Activated T-helper 1 cell treated with anti-CD3 and anti-CD28 coated beads, Interleukin-12 subunit alpha, Interleukin-12 subunit beta, Interleukin-2, Interleukin-4 antibody, amounts not matched to agents 30 ng/mL and 10 ng/mL and 1 ng/mL, durations not matched to agents 14 hours and 24 hours and 36 hours (primary cell): ENCODE measurements at regions of chr1 and their contacts with region 1.

Region 1: DNA sequence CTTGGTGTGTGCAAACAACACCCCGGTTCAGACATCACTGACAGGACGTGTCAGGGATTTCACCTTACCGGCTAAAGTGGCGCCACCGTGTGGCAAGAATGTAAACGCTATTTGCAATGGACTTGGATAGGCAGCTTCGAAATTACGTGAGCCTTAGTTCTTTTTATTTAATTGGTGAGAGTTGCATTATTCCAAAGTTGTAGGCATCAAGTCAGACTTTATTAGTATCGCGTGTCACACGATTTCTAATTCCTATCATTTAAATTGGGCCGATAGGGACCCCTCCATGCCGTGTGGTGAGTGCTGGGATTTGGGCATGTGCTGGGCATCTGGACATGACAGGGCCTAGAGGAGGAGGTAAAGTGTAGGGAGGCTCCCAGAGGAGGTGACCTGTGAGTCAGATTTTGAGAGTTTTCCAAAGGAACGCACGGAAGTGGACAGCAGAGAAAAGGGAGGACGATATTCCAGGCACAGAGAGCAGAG is 14.5 kb upstream of the CPT2 start:
- DNase-seq: peak; percentile 63
- H3K4me3 Mint-ChIP-seq: no peak overlapping the region
- H3K27ac Mint-ChIP-seq: no peak overlapping the region
- H3K4me1 Mint-ChIP-seq: no peaks in the 10 kb centered on the region
- H3K27me3 Mint-ChIP-seq: peaks cover 8% of the 10 kb centered on the region

Region 2: DNA sequence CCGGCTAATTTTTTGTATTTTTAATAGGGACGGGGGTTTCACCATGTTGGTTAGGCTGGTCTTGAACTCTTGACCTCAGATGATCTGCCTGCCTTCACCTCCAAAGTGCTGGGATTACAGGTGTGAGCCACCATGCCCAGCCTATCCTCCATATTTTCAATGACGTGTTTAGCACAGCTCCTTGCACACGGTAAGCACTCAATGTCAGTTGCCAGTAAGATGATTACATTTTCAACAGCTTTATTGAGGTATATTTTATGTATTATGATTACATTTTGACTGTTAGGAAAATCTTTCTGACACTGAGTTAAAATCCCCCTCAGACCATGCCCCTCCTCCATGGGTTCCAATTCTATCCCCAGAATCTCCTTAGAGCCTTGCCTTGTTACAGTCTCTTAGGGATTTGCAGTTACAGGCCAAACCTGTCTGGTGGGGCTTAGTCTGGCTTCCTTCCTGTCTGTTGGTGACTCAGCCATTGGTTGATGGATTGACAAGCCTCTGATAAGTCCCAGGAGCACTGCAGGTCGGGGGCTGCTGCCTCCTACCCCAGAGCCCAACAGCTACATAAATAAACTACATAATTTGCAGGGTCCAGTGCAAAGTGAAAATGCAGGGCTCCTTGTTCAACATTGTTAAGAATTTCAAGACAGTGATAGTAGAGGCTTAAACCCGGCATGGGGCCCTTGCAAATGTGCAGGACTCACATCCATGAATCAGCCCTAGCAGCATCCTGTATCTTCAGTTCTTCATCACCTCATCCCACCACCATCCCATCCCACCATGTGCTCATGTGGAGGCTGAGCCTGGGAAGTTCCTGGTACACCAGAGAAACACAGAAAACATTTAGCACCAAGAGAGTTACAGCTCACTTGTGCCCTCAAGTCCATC is 507.4 kb before region 1 on chr1:
- intact Hi-C with region 1: no loop called
- DNase-seq: no peak
- H3K4me3 Mint-ChIP-seq: no peak overlapping the region
- H3K27ac Mint-ChIP-seq: peak overlapping the region; percentile 2
- H3K4me1 Mint-ChIP-seq: peaks cover 10% of the 10 kb centered on the region
- H3K27me3 Mint-ChIP-seq: peaks cover 2% of the 10 kb centered on the region

Region 3: GRCh38 chr1:52904927-52905698 is 277.0 kb before region 1 on chr1:
- intact Hi-C with region 1: loop called (anchors 1 kb)
- DNase-seq: no peak
- H3K4me3 Mint-ChIP-seq: no peak overlapping the region
- H3K27ac Mint-ChIP-seq: no peak overlapping the region
- H3K4me1 Mint-ChIP-seq: no peaks in the 10 kb centered on the region
- H3K27me3 Mint-ChIP-seq: no peaks in the 10 kb centered on the region

Region 4: DNA sequence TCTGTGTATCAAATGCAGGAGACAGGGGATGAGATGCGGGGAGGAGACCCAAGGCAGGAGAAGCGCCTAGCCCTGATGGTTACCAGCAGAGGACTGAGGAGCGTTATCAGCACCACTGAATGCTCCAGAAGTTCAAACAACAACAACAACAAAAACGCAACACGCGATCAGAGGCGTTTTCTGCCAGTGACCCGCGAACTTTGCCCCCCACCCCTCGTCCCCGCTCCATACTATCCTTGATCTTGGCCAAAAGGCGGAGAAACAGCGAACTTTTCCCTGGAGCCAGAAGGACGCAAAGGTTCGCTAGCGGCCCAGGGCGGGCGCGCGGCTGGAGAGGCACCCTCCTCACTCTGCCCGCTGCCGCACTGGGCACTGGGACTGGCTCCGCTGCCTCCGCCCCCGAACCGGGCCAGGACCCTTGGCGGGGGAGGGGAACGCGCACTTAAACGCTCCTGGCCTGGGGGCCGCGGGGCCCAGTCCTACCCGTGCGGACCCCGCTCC is 261.3 kb before region 1 on chr1:
- intact Hi-C with region 1: loop called (anchors 5 kb)
- DNase-seq: no peak
- H3K4me3 Mint-ChIP-seq: peak overlapping the region; percentile 86
- H3K27ac Mint-ChIP-seq: no peak overlapping the region
- H3K4me1 Mint-ChIP-seq: peaks cover 14% of the 10 kb centered on the region
- H3K27me3 Mint-ChIP-seq: peaks cover 2% of the 10 kb centered on the region

Region 5: DNA sequence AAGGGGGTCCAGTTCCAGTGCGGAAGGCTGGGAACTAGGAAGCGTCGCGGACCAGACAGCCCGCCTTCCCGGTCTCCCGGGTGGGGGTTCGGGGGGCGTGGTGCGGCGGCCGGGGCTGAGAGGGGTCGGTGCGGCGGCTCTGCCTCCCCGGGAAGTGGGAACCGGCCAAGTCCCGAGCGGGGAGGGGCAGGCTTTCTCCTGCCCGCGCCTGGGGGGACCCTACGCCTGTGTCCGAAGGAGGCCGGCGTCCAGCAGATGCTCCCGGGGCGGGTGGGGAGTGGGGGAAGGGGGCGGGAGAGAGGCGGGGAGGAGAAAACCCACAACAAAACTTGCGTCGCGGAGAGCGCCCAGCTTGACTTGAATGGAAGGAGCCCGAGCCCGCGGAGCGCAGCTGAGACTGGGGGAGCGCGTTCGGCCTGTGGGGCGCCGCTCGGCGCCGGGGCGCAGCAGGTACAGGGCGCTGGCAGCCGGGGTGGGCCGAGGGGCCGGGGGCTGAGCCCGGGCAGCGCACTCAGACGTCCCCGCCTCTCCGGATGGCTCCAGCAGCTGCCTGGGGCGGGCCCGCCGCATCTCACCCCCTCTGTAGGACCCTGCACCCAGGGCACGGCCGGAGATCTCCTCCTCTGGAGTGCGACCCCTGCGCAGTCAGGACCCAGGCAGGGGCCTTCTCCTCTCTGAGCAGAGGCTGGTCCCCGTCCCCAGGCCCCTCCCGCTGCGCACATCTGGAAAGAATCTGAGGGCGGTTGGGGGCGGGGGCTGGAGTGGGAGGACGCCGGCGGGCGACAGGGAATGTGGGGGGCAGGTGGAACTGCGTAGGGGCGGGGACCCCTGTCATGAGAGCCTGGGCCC is 120.1 kb before region 1 on chr1 and contains the start of gene PODN:
- intact Hi-C with region 1: loop called (anchors 10 kb)
- DNase-seq: no peak
- H3K4me3 Mint-ChIP-seq: no peak within 1 kb of the TSS
- H3K27ac Mint-ChIP-seq: no peak within 1 kb of the TSS
- H3K4me1 Mint-ChIP-seq: no peaks in the 10 kb centered on the region
- H3K27me3 Mint-ChIP-seq: peaks cover 41% of the 10 kb centered on the region
- total RNA-seq, gene PODN: not detected in 2 replicates